ENCODE measurements at regions of chr12 and their contacts with region 1.

Region 1: GRCh38 chr12:60035835-60036234 is 440.0 kb downstream of the SLC16A7 start:
- DNase-seq: no peak
- H3K4me3 ChIP-seq: no peak overlapping the region
- H3K27ac ChIP-seq: no peak overlapping the region
- H3K4me1 ChIP-seq: no peaks in the 10 kb centered on the region
- H3K27me3 ChIP-seq: no peaks in the 10 kb centered on the region
- CTCF ChIP-seq: no peak
- EP300 ChIP-seq: no peak
- POLR2A ChIP-seq: no peak

Region 2: DNA sequence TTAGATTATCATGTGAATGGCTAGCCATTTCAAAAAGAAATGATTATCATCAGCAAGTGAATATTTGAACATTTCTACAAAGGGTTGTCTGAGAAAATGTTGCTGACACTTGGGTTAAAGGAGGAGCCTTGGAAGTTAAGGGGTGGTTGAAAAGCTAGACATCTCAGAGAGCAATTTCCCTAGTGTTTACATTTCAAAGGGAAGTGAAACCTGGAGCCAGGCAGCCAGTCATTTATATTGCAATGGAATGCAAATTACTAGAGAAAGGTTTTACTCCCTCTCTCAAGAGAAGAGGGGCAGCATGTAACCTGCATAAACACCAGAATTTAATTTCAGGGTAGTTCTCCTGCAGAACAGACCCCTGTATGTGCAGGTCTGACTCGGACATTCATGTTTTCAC is 161.1 kb before region 1 on chr12:
- intact Hi-C with region 1: no loop called
- DNase-seq: peak in 1 of 2 donors; percentile 23
- H3K4me3 ChIP-seq: no peak overlapping the region
- H3K27ac ChIP-seq: no peak overlapping the region
- H3K4me1 ChIP-seq: no peaks in the 10 kb centered on the region
- H3K27me3 ChIP-seq: no peaks in the 10 kb centered on the region
- CTCF ChIP-seq: no peak
- EP300 ChIP-seq: no peak
- POLR2A ChIP-seq: no peak

Region 3: GRCh38 chr12:60176891-60177290 is 141.1 kb after region 1 on chr12:
- intact Hi-C with region 1: no loop called
- DNase-seq: no peak
- H3K4me3 ChIP-seq: no peak overlapping the region
- H3K27ac ChIP-seq: no peak overlapping the region
- H3K4me1 ChIP-seq: no peaks in the 10 kb centered on the region
- H3K27me3 ChIP-seq: no peaks in the 10 kb centered on the region
- CTCF ChIP-seq: no peak
- EP300 ChIP-seq: no peak
- POLR2A ChIP-seq: no peak

Region 4: GRCh38 chr12:60863421-60863820 is 827.6 kb after region 1 on chr12:
- intact Hi-C with region 1: loop called (anchors 10 kb)
- DNase-seq: no peak
- H3K4me3 ChIP-seq: no peak overlapping the region
- H3K27ac ChIP-seq: no peak overlapping the region
- H3K4me1 ChIP-seq: no peaks in the 10 kb centered on the region
- H3K27me3 ChIP-seq: no peaks in the 10 kb centered on the region
- CTCF ChIP-seq: no peak
- EP300 ChIP-seq: no peak
- POLR2A ChIP-seq: no peak